Gastrocnemius medialis (tissue), 4 donors: ENCODE measurements at regions of chr1 and their contacts with region 1.

Region 1: DNA sequence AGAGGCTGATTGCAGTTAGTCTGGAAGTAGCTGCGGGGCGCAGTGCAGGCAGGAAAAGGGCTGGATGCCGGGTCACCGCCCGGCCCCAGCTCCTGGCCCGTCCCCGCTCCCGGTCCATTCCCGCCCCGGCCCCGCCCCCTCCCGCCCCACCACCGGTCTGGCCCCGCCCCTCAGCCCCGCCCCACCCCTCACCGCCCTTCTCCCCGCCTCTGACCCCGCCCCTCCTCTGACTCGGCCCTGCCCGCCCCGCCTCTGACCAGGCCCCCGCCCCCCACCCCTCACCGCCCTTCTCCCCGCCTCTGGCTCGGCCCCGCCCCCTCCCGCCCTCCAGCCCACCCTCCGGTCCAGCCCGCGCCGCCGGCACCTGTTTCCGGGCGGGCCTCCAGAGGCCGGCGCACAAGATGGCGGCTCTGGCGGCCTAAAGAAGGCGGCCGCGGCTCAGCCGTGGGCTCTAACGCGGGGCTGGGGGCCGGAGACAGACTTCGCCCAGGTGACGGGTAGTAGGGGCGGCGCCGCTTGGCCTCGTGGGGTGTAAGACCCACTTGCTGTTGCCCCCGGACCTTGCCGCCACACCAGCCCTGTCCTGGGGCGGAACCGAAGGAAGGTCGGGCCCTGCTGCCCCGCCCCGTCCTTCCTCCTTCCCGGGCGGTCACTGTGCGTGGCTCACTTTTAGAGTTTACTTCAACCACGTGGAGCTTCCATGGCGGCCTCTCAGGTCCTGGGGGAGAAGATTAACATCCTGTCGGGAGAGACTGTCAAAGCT is at the start of gene UBIAD1:
- DNase-seq: peak; percentile 82 to 83
- ATAC-seq: peak; percentile 93 to 95
- H3K4me3 ChIP-seq: peak within 1 kb of the TSS; percentile 69 to 96 (median 92)
- H3K27ac ChIP-seq: peak within 1 kb of the TSS; percentile 93 to 99 (median 96)
- H3K4me1 ChIP-seq: peaks cover 26 to 29% of the 10 kb centered on the region in 2 donors
- H3K27me3 ChIP-seq: no peaks in the 10 kb centered on the region
- CTCF ChIP-seq: peak in 1 of 5 experiments; percentile 20
- POLR2A ChIP-seq: peak; percentile 63 to 70
- total RNA-seq, gene UBIAD1: 15.1 to 24.5 (median 20.2) TPM

Region 2: GRCh38 chr1:11262171-11263049 is 10.6 kb before region 1 on chr1 and contains the start of gene MTOR:
- in situ Hi-C with region 1: no loop called
- intact Hi-C with region 1: loop called (anchors 1 kb)
- DNase-seq: peak; percentile 99 to 100
- ATAC-seq: peak; percentile 99 to 100
- H3K4me3 ChIP-seq: peak within 1 kb of the TSS; percentile 81 to 100 (median 94)
- H3K27ac ChIP-seq: peak within 1 kb of the TSS; percentile 90 to 94 (median 94)
- H3K4me1 ChIP-seq: peaks cover 6 to 13% of the 10 kb centered on the region in 2 donors
- H3K27me3 ChIP-seq: no peaks in the 10 kb centered on the region
- CTCF ChIP-seq: peak in 3 of 5 experiments; percentile 9 to 21 (median 20)
- POLR2A ChIP-seq: peak; percentile 70 to 80
- total RNA-seq, gene MTOR: 40.7 to 66.3 (median 52.9) TPM